ENCODE measurements at regions of chr7 and their contacts with region 1.

Region 1: GRCh38 chr7:28020302-28020940 is 160.2 kb downstream of the JAZF1 start:
- DNase-seq: peak; percentile 31
- H3K4me3 Mint-ChIP-seq: no peak overlapping the region
- H3K27ac Mint-ChIP-seq: no peak overlapping the region
- H3K4me1 Mint-ChIP-seq: peaks cover 3% of the 10 kb centered on the region
- H3K27me3 Mint-ChIP-seq: no peaks in the 10 kb centered on the region

Region 2: GRCh38 chr7:27921081-27921836 is 99.2 kb before region 1 on chr7:
- CTCF ChIA-PET with region 1: interaction called, 19 read pairs
- POLR2A ChIA-PET with region 1: no interaction called
- DNase-seq: no peak
- H3K4me3 Mint-ChIP-seq: no peak overlapping the region
- H3K27ac Mint-ChIP-seq: no peak overlapping the region
- H3K4me1 Mint-ChIP-seq: peaks cover 8% of the 10 kb centered on the region
- H3K27me3 Mint-ChIP-seq: no peaks in the 10 kb centered on the region

Region 3: DNA sequence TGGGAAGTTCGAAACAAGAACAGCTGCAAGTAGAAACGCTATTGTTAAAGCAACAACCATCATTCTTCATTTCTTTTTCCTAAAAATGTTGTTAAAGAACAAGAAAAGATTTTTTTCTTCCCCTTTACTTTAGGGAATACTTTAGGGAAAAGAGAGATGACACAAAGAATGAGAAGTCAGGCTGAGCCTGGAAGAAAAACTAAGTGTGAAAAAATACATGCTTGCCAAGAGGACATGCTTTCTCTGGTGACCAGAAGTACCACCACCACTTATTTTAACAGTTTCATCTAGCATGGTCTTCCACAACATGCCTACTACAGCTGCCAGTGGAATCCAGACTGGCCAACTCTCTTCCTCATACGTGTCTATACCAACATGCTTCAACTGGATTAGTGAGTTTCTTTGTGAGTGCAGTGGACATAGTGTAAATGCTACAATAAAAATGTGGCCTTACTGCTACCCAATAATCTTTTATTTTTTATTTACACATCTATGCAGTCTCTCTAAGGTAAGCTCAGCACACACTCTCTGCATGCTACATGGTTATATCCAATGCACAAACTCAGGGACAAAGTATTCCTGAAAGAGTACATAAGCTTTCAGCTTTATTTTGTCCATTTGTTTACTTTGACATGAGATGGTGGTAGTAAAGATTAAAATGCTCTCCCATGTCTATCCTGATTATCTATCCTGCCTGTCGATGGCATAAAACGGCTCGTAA is 84.2 kb before region 1 on chr7:
- CTCF ChIA-PET with region 1: interaction called, 12 read pairs
- POLR2A ChIA-PET with region 1: no interaction called
- DNase-seq: no peak
- H3K4me3 Mint-ChIP-seq: no peak overlapping the region
- H3K27ac Mint-ChIP-seq: no peak overlapping the region
- H3K4me1 Mint-ChIP-seq: no peaks in the 10 kb centered on the region
- H3K27me3 Mint-ChIP-seq: no peaks in the 10 kb centered on the region

Region 4: DNA sequence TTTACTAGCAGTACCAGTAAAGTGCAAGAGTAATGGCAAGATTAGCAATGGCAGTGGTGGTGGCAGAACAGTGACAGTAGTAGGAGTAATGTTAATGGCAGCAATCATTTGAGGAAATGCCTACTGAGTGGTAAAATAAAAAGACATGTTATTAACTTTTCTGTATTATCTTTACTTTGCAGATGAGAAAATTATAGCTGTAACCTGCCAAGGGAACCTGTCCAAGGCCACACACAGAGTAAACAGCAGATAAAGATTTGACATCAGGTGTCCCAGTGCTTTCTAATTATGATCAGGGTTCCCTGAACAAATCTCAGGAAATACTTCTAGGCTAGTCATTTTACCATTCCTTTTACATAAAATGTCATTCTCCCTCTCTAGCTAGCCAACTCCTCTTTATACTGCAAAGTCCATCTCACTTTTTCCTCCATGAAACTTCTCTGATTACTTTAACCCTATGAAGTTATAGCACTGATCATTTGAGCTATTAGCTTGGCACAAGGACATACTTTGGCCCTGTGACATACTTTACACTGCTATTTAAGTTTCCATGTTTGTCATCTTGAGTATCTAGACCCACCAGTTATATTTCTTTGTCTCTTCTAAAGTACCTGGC is 61.4 kb before region 1 on chr7:
- CTCF ChIA-PET with region 1: no interaction called
- POLR2A ChIA-PET with region 1: no interaction called
- DNase-seq: no peak
- H3K4me3 Mint-ChIP-seq: no peak overlapping the region
- H3K27ac Mint-ChIP-seq: no peak overlapping the region
- H3K4me1 Mint-ChIP-seq: peaks cover 4% of the 10 kb centered on the region
- H3K27me3 Mint-ChIP-seq: no peaks in the 10 kb centered on the region

Region 5: GRCh38 chr7:28041491-28042314 is 21.3 kb after region 1 on chr7:
- CTCF ChIA-PET with region 1: no interaction called
- POLR2A ChIA-PET with region 1: no interaction called
- DNase-seq: no peak
- H3K4me3 Mint-ChIP-seq: no peak overlapping the region
- H3K27ac Mint-ChIP-seq: no peak overlapping the region
- H3K4me1 Mint-ChIP-seq: peaks cover 30% of the 10 kb centered on the region
- H3K27me3 Mint-ChIP-seq: peaks cover 6% of the 10 kb centered on the region

Measured in activated CD4-positive, alpha-beta memory T cell treated with anti-CD3 and anti-CD28 coated beads, Interleukin-2, amount 10 ng/mL, durations not matched to agents 7 days and 5 days (primary cell).